Activated naive CD8-positive, alpha-beta T cell treated with anti-CD3 and anti-CD28 coated beads, Interleukin-2, amount 10 ng/mL, durations not matched to agents 7 days and 5 days (primary cell): ENCODE measurements at regions of chr17 and their contacts with region 1.

Region 1: GRCh38 chr17:17859909-17860765 is 23.4 kb upstream of the SREBF1 start:
- DNase-seq: peak; percentile 78
- ATAC-seq: peak; percentile 90
- H3K4me3 Mint-ChIP-seq: no peak overlapping the region
- H3K27ac Mint-ChIP-seq: peak overlapping the region; percentile 56
- H3K4me1 Mint-ChIP-seq: peaks cover 29% of the 10 kb centered on the region
- H3K27me3 Mint-ChIP-seq: no peaks in the 10 kb centered on the region

Region 2: GRCh38 chr17:17812211-17813057 is 47.7 kb before region 1 on chr17:
- POLR2A ChIA-PET with region 1: interaction called, 11 read pairs
- DNase-seq: peak; percentile 81
- ATAC-seq: peak; percentile 17
- H3K4me3 Mint-ChIP-seq: no peak overlapping the region
- H3K27ac Mint-ChIP-seq: peak overlapping the region; percentile 34
- H3K4me1 Mint-ChIP-seq: peaks cover 14% of the 10 kb centered on the region
- H3K27me3 Mint-ChIP-seq: no peaks in the 10 kb centered on the region

Region 3: DNA sequence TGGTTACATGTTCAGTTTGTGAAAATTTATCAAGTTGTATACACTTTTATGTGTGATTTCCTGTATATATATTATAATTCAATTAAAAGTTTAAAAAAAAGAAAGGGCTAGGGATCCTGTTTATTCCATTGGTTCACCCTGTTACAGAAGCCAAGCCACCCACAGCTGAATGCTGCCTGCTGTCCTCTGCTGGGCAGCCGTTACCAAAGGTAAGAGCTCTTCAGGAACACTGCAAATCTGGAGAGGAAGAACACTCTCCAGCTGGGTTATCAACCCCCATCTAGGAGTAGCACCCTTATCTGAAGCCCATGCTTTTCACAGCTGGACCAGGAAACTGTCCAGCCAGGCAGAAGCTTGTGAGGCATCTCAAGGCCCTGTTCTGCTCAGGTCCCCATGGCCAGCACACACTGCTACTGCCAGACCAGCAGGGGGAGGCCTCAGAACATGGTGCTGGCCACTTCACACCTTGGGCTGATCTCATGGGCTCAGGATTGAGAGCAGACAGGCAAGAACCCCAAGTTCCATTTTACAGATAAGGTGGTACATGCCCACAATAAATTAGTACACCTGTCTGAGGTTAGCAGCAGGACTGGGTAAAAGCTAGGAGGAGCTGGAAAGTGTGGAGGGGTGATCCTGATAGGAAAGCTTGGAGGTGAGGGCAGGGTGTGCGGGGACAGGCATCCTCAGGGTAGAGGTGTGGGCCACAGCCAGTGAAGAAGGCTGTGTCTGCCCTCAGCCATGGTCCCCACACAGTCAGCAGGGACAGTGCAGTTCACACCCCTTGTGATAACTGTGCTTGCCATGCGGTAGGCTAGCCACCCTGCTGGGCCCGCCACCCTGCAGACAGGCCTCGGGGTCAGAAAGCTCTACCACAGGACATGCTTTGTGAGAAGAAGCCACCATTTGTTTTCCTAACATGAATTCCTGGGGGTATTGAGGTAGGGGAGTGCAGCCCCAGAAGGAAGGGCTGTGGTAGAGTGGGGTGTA is 30.9 kb after region 1 on chr17:
- POLR2A ChIA-PET with region 1: no interaction called
- DNase-seq: peak; percentile 47
- ATAC-seq: peak; percentile 85
- H3K4me3 Mint-ChIP-seq: no peak overlapping the region
- H3K27ac Mint-ChIP-seq: no peak overlapping the region
- H3K4me1 Mint-ChIP-seq: peaks cover 13% of the 10 kb centered on the region
- H3K27me3 Mint-ChIP-seq: no peaks in the 10 kb centered on the region